ENCODE measurements at regions of chr5 and their contacts with region 1.

Region 1: GRCh38 chr5:81665795-81666194 is 85.1 kb downstream of the SSBP2 start:
- DNase-seq: no peak
- ATAC-seq: no peak
- H3K4me3 ChIP-seq: no peak overlapping the region
- H3K4me3 Mint-ChIP-seq: no peak overlapping the region
- H3K27ac ChIP-seq: no peak overlapping the region
- H3K27ac Mint-ChIP-seq: no peak overlapping the region
- H3K4me1 ChIP-seq: no peaks in the 10 kb centered on the region
- H3K4me1 Mint-ChIP-seq: peaks cover 27 to 31% (median 28%) of the 10 kb centered on the region in 3 donors
- H3K27me3 ChIP-seq: no peaks in the 10 kb centered on the region
- H3K27me3 Mint-ChIP-seq: no peaks in the 10 kb centered on the region

Region 2: DNA sequence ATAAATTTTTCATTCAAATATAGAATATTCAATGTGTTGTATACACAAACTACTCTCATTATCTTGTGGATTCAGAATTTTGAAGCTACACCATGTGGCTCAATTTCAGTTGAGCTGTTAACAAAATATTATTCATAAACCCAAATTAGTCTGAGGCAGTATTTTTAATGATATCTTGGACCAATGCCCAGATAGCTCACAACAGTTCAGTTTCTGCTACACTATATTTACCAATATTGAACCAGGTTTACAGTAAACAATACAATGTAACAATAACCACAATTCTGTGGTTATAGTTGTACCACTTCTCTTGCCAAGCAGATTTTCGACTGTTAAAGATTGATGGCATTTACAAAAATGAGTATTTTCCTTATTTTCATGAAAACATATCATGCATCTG is 14.8 kb before region 1 on chr5:
- CTCF ChIA-PET with region 1: no interaction called
- POLR2A ChIA-PET with region 1: no interaction called
- DNase-seq: no peak
- ATAC-seq: no peak
- H3K4me3 ChIP-seq: no peak overlapping the region
- H3K4me3 Mint-ChIP-seq: no peak overlapping the region
- H3K27ac ChIP-seq: no peak overlapping the region
- H3K27ac Mint-ChIP-seq: no peak overlapping the region
- H3K4me1 ChIP-seq: no peaks in the 10 kb centered on the region
- H3K4me1 Mint-ChIP-seq: peaks cover 11 to 14% (median 13%) of the 10 kb centered on the region in 3 donors
- H3K27me3 ChIP-seq: no peaks in the 10 kb centered on the region
- H3K27me3 Mint-ChIP-seq: no peaks in the 10 kb centered on the region

Region 3: GRCh38 chr5:81837667-81838306 is 172.0 kb after region 1 on chr5:
- CTCF ChIA-PET with region 1: no interaction called
- POLR2A ChIA-PET with region 1: interaction called in 1 of 2 experiments, 16 read pairs
- DNase-seq: no peak
- ATAC-seq: no peak
- H3K4me3 ChIP-seq: no peak overlapping the region
- H3K4me3 Mint-ChIP-seq: no peak overlapping the region
- H3K27ac ChIP-seq: no peak overlapping the region
- H3K27ac Mint-ChIP-seq: no peak overlapping the region
- H3K4me1 ChIP-seq: peaks cover 0 to 3% of the 10 kb centered on the region in 2 experiments
- H3K4me1 Mint-ChIP-seq: peaks cover 6 to 10% (median 8%) of the 10 kb centered on the region in 3 donors
- H3K27me3 ChIP-seq: no peaks in the 10 kb centered on the region
- H3K27me3 Mint-ChIP-seq: no peaks in the 10 kb centered on the region